H1 (cell line): ENCODE measurements at regions of chr11 and their contacts with region 1.

Region 1: GRCh38 chr11:69101115-69101791 is 52.5 kb downstream of the TPCN2 start:
- DNase-seq: peak; percentile 60 to 96
- H3K4me3 ChIP-seq: no peak overlapping the region
- H3K27ac ChIP-seq: no peak overlapping the region
- H3K4me1 ChIP-seq: peaks cover 0 to 14% (median 4%) of the 10 kb centered on the region in 4 experiments; a peak in 4 of 7 replicates
- H3K27me3 ChIP-seq: no peaks in the 10 kb centered on the region
- CTCF ChIP-seq: peak in 2 of 3 experiments; percentile 96 to 100; a peak in 3 of 4 replicates
- EP300 ChIP-seq: no peak
- POLR2A ChIP-seq: no peak; a peak in 1 of 3 replicates
- RAD21 ChIP-seq: peak; percentile 99 to 100

Region 2: DNA sequence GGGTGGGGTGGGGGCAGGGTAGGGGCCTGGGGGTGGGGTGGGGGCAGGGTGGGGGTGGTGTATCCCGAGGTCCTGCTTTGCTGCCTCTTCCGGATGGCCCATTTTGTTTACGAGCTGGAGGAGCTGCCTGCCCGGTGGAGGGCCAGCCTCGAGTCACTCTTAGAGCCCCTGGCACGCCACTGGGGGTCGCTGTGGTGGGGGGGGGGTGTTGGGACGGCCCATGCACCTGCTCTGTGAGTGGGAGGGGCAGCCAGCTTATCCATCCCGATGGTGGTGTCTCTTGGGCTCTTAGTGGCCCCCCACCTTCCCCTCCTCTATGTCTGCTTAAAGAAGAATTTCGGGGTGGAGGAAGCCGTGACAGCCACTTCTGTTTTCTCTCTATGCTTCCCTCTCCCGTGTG is 145.1 kb before region 1 on chr11:
- CTCF ChIA-PET with region 1: interaction called, 13 read pairs
- POLR2A ChIA-PET with region 1: no interaction called
- DNase-seq: peak in 1 of 2 experiments; percentile 85
- H3K4me3 ChIP-seq: no peak overlapping the region
- H3K27ac ChIP-seq: no peak overlapping the region
- H3K4me1 ChIP-seq: peaks cover 0 to 8% (median 4%) of the 10 kb centered on the region in 4 experiments; a peak in 4 of 7 replicates
- H3K27me3 ChIP-seq: no peaks in the 10 kb centered on the region
- CTCF ChIP-seq: peak; percentile 65 to 73 (median 73)
- EP300 ChIP-seq: no peak
- POLR2A ChIP-seq: no peak
- RAD21 ChIP-seq: peak; percentile 33 to 56; a peak in 3 of 4 replicates

Region 3: DNA sequence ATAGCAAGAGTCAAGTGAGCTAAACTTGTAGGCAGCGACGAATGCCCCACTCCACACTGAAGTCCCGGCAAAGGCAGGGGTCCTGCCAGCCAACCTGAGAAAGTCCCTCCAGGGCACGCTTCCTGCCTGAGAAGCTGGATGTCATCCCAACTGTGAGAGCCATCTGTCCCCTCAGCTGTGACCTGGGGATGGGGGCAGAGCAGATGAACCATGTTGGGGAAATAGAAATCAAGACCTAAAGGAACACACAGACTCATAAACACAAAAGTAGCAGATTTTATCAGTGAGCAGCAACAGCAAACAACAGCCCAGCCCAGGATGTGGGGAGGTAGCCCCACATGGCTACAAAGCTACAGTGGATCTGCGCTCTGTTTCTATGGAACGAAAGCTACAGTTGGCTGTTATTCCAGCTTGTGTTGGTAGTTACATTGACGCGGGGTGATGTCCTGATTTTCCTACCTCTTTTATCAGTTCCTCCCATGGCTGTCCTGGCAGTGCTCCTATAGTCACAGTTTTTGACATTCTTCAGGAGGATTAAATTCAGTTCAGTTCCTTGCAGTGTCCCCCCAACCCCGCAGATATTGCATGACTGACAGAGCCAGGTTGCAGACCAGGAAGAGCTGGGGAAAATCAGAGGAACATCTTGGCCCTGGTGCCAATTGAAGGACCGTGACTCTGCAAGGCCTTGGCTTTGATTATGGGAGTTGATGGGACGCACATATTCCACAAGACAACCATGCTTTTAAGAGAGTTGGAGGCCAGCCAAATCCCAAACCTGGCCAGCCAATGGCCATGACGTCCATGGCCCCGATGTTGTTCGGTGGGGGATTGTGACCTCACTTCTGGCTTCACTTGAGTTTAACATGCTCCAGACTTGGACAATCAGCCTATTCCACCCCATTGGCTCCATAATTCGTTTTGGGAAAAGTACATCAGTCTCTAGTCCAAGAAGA is 135.1 kb before region 1 on chr11:
- CTCF ChIA-PET with region 1: no interaction called
- POLR2A ChIA-PET with region 1: no interaction called
- DNase-seq: no peak
- H3K4me3 ChIP-seq: no peak overlapping the region
- H3K27ac ChIP-seq: no peak overlapping the region
- H3K4me1 ChIP-seq: no peaks in the 10 kb centered on the region
- H3K27me3 ChIP-seq: no peaks in the 10 kb centered on the region; a peak in 1 of 7 replicates
- CTCF ChIP-seq: no peak
- EP300 ChIP-seq: no peak
- POLR2A ChIP-seq: no peak
- RAD21 ChIP-seq: no peak

Region 4: GRCh38 chr11:69027704-69028372 is 73.4 kb before region 1 on chr11:
- CTCF ChIA-PET with region 1: no interaction called
- POLR2A ChIA-PET with region 1: no interaction called
- DNase-seq: no peak
- H3K4me3 ChIP-seq: no peak overlapping the region
- H3K27ac ChIP-seq: no peak overlapping the region
- H3K4me1 ChIP-seq: no peaks in the 10 kb centered on the region
- H3K27me3 ChIP-seq: no peaks in the 10 kb centered on the region
- CTCF ChIP-seq: no peak
- EP300 ChIP-seq: no peak
- POLR2A ChIP-seq: no peak
- RAD21 ChIP-seq: no peak

Region 5: GRCh38 chr11:69075421-69076128 is 25.7 kb before region 1 on chr11:
- CTCF ChIA-PET with region 1: no interaction called
- POLR2A ChIA-PET with region 1: no interaction called
- DNase-seq: no peak
- H3K4me3 ChIP-seq: no peak overlapping the region
- H3K27ac ChIP-seq: no peak overlapping the region
- H3K4me1 ChIP-seq: no peaks in the 10 kb centered on the region
- H3K27me3 ChIP-seq: no peaks in the 10 kb centered on the region
- CTCF ChIP-seq: no peak
- EP300 ChIP-seq: no peak
- POLR2A ChIP-seq: no peak
- RAD21 ChIP-seq: no peak

Region 6: GRCh38 chr11:69115586-69116560 is 14.6 kb after region 1 on chr11:
- CTCF ChIA-PET with region 1: interaction called, 27 read pairs
- POLR2A ChIA-PET with region 1: interaction called, 4 read pairs
- DNase-seq: no peak
- H3K4me3 ChIP-seq: no peak overlapping the region
- H3K27ac ChIP-seq: no peak overlapping the region
- H3K4me1 ChIP-seq: no peaks in the 10 kb centered on the region; a peak in 1 of 7 replicates
- H3K27me3 ChIP-seq: no peaks in the 10 kb centered on the region; a peak in 1 of 7 replicates
- CTCF ChIP-seq: no peak
- EP300 ChIP-seq: no peak
- POLR2A ChIP-seq: no peak
- RAD21 ChIP-seq: no peak

Region 7: GRCh38 chr11:69186312-69187260 is 85.3 kb after region 1 on chr11:
- CTCF ChIA-PET with region 1: no interaction called
- POLR2A ChIA-PET with region 1: no interaction called
- DNase-seq: no peak
- H3K4me3 ChIP-seq: no peak overlapping the region
- H3K27ac ChIP-seq: no peak overlapping the region
- H3K4me1 ChIP-seq: no peaks in the 10 kb centered on the region
- H3K27me3 ChIP-seq: no peaks in the 10 kb centered on the region
- CTCF ChIP-seq: no peak
- EP300 ChIP-seq: no peak
- POLR2A ChIP-seq: no peak
- RAD21 ChIP-seq: no peak

Region 8: DNA sequence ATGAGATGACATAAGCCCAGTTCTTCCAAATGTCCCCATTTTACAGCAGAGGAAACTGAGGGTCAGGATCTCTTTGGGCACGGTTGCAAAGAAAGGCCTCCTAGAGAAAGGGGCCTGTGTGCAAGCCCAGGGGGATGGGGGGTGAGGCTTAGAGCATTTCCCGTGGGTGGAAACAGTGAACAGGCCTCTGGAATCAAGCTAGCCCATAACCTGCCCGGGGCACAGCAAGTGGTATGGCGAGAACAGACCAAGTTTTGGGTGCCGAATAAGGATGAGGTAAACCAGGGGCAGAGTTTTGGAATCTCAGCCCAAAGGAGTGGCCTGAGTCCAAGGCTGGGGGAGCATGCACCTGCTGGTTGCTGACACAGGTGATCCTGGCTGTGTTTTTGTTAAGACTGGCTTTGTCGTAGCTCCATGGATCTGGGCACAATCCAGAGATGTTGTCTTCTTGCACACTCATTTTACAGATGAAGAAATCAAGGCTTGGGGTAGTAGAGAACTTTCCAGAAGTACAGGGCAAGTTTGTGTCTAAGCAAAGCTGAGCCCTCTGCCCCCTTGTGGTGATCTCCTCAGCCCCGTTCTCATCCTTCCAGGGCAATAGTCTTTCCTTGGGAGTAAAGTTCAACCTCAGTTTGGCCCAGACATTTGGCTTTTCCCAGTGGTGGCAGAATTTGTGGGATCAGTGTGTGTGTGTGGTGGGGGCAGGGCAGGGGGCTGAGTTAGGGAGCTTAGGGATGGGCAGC is 139.2 kb after region 1 on chr11:
- CTCF ChIA-PET with region 1: interaction called, 39 read pairs
- POLR2A ChIA-PET with region 1: no interaction called
- DNase-seq: no peak
- H3K4me3 ChIP-seq: no peak overlapping the region
- H3K27ac ChIP-seq: no peak overlapping the region
- H3K4me1 ChIP-seq: no peaks in the 10 kb centered on the region
- H3K27me3 ChIP-seq: no peaks in the 10 kb centered on the region
- CTCF ChIP-seq: peak; percentile 48 to 70 (median 60)
- EP300 ChIP-seq: no peak
- POLR2A ChIP-seq: no peak
- RAD21 ChIP-seq: peak; percentile 48 to 66

Region 9: DNA sequence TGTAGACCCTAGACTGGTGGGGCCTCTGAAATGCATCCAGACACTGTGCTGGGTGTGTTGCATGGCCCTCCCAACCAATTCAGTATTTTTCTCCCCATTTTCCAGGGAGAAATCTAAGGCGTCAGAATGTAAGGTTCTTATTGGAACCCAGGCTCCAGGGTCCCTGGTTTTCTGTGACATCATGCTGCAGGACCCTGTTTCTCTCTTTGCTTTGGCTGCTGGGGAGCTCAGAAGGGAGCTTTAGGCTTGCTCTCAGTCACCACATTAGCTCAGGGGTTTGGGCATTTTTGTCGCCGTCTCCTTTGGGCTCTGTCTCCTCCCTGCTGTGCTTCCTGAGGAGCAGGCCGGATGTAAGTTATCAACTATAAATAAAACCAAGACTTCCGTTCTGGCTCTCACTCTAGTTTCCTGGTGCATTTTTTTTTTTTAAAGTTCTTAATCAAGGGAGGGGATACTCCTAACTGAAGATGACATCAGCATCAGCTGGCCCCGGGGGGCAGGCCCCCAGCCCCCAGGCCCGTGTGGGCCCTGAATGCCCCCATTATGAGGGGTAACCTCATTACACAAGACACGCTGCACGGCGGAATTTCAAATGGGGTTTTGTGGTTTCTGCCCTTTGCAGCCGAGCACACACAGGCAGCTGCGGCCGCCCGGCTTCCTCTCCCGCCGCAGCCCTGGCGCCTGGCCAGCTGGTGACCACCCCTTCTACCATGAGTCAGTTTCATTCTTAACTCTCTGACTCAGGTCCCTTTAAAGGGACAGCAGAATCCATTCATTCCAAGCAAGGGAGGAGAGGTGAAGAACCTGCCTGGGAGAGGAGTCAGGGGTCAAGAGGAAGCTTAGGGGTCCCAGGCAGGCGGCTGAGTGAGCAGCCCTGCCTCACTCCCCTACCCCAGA is 195.9 kb after region 1 on chr11:
- CTCF ChIA-PET with region 1: interaction called, 16 read pairs
- POLR2A ChIA-PET with region 1: no interaction called
- DNase-seq: peak in 1 of 2 experiments; percentile 31
- H3K4me3 ChIP-seq: no peak overlapping the region
- H3K27ac ChIP-seq: no peak overlapping the region
- H3K4me1 ChIP-seq: peaks cover 0 to 2% (median under 1%) of the 10 kb centered on the region in 4 experiments; a peak in 2 of 7 replicates
- H3K27me3 ChIP-seq: no peaks in the 10 kb centered on the region; a peak in 1 of 7 replicates
- CTCF ChIP-seq: no peak
- EP300 ChIP-seq: no peak
- POLR2A ChIP-seq: no peak
- RAD21 ChIP-seq: no peak

Region 10: DNA sequence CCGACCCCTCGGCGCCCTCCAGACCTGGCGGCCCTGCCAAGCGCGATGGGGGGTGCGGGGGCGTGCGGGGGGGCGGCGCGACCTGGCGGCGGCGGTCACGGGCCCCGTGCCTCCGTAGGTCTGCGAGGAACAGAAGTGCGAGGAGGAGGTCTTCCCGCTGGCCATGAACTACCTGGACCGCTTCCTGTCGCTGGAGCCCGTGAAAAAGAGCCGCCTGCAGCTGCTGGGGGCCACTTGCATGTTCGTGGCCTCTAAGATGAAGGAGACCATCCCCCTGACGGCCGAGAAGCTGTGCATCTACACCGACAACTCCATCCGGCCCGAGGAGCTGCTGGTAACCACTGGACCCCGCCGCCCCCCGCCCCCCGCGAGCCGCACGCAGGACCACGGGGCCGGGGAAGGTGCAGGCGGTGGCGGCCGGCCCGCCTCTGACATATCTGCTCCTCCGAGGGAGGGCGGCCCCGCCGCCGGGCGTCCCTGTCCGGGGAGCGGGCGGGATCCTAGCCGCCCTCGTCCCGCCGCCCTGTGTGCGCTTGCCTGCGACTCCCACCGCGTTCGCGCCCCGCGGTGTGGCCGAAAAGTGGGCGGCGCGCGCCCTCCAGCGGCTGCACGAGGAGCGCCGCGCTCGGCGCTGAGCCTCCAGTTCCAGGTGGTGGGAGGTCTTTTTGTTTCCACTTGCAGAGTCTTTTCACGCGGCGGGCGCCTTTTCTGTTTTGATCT is 541.8 kb after region 1 on chr11:
- CTCF ChIA-PET with region 1: interaction called, 10 read pairs
- POLR2A ChIA-PET with region 1: interaction called, 6 read pairs
- DNase-seq: peak in 1 of 2 experiments; percentile 90
- H3K4me3 ChIP-seq: peak overlapping the region; percentile 90 to 97 (median 95)
- H3K27ac ChIP-seq: no peak overlapping the region
- H3K4me1 ChIP-seq: peaks cover 0 to 9% (median 5%) of the 10 kb centered on the region in 4 experiments; a peak in 5 of 7 replicates
- H3K27me3 ChIP-seq: peaks cover 0 to 6% (median 2%) of the 10 kb centered on the region in 4 experiments; a peak in 1 of 7 replicates
- CTCF ChIP-seq: peak in 2 of 3 experiments; percentile 91 to 94; a peak in 3 of 4 replicates
- EP300 ChIP-seq: no peak
- POLR2A ChIP-seq: peak in 1 of 2 experiments; percentile 69; a peak in 2 of 3 replicates
- RAD21 ChIP-seq: peak; percentile 93 to 98

Region 11: DNA sequence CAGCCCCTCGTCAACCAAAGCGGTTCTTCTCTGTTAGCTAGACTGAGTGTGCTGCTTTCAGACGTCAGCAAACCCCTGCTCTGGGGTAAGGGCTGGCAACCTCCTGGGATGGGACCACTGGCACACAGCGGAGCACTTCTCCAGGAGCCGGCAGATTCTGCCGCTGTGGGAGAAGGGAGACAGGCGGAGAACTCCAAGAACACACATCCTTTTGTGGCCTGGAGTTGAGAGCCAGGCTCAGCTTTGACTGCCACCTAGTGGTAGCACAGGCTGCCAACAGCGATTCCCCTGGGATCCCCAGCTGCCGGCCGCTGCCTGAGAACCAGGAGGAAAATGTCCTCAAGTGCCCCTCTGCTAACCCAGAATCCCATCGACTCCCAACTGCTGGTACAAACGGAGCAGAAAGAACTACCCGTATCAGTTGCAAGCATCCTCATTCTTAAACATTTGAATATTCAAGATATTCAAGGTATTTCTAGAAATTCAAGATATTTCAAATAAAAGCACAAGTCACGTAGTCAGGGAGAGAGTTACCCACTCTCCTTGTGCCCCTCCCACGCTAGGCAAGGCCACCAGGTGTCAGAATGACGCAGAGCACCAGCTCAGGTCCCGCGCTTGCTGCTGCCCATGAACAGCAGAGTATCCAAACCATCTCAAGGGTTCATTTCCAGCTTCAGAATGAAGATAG is 569.0 kb after region 1 on chr11:
- CTCF ChIA-PET with region 1: interaction called, 17 read pairs
- POLR2A ChIA-PET with region 1: no interaction called
- DNase-seq: peak in 1 of 2 experiments; percentile 90
- H3K4me3 ChIP-seq: no peak overlapping the region
- H3K27ac ChIP-seq: no peak overlapping the region
- H3K4me1 ChIP-seq: peaks cover 3 to 5% (median 4%) of the 10 kb centered on the region in 4 experiments
- H3K27me3 ChIP-seq: no peaks in the 10 kb centered on the region
- CTCF ChIP-seq: peak; percentile 87 to 99 (median 98)
- EP300 ChIP-seq: no peak
- POLR2A ChIP-seq: no peak
- RAD21 ChIP-seq: peak; percentile 88 to 89